CD4-positive, alpha-beta memory T cell (primary cell): ENCODE measurements at regions of chr13 and their contacts with region 1.

Region 1: DNA sequence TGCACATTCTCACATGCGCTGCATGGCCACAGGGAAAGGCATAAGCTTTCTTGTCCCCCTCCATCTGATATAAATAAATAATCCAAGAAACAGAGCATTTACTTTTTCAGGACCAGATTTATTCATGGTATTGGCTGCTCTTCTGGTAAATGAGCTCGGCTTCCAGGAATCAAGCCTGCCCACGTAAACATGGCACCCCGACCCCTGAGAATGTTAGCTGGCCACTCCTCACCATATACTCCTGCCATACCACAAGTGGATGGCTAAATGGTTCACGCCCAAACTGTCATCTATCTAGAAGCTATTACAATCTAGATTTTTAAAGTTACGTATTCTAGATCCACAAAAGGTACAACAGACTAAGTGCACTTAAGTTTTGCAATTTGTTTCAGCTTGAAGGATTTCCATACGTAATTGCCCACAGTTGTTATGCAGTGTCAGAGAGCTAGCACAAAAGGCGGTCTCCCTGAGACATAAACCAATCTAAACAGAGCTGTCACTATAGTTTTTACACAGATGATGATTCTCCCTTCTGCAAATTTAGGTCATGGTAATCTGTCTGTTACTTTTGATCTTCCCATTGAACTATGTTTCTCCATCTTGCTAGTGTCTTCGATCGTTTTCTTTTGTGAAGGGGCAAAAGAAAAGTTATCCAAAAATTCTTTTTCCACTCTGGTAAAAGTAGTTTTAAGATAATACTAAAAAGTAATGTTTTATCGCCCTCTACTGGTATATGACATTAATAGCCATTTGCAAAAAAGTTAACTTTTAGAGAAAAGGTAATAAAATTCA is 16.2 kb upstream of the FOXO1 start:
- DNase-seq: peak in 4 of 5 donors; percentile 44 to 58 (median 52)
- H3K4me3 ChIP-seq: no peak overlapping the region
- H3K4me3 Mint-ChIP-seq: peak overlapping the region in 1 of 8 donors; percentile 46
- H3K27ac ChIP-seq: no peak overlapping the region
- H3K27ac Mint-ChIP-seq: peak overlapping the region in 1 of 7 donors; percentile 48
- H3K4me1 ChIP-seq: peaks cover 4% of the 10 kb centered on the region
- H3K4me1 Mint-ChIP-seq: peaks cover 5 to 8% (median 6%) of the 10 kb centered on the region in 4 donors
- H3K27me3 ChIP-seq: no peaks in the 10 kb centered on the region
- H3K27me3 Mint-ChIP-seq: no peaks in the 10 kb centered on the region

Region 2: DNA sequence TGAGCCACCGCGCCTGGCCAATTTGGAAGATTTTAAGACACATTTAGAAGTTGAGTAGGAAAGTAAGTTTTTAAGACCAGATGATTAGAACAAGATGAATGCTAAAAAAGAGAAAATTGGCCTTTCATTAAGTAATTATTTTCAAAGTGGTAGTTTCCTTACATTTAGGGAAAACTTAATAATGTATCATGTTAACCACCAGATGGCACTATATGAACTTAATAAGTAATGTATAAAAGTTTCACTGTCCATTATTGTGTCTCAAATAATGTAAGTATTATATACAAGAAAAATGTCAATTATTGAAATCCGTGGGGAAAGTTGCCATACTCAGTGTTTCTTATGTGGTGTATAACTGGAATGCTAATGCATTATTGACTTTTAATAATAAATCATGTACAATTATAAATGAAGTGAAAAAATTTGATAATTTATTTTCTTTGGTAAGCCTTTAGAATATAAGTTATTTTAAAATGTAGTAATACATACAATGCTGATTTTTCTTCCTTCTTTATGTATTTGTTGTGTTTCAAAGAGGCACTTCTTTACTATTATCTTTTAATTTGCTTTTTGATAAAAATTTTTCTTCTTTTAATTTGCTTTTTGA is 998.0 kb before region 1 on chr13:
- CTCF ChIA-PET with region 1: interaction called, 70 read pairs
- POLR2A ChIA-PET with region 1: no interaction called
- intact Hi-C with region 1: loop called (anchors 1 kb)
- DNase-seq: peak in 4 of 5 donors; percentile 26 to 41 (median 29)
- H3K4me3 ChIP-seq: no peak overlapping the region
- H3K4me3 Mint-ChIP-seq: no peak overlapping the region
- H3K27ac ChIP-seq: no peak overlapping the region
- H3K27ac Mint-ChIP-seq: no peak overlapping the region
- H3K4me1 ChIP-seq: no peaks in the 10 kb centered on the region
- H3K4me1 Mint-ChIP-seq: peaks cover 0 to 16% (median 6%) of the 10 kb centered on the region in 4 donors
- H3K27me3 ChIP-seq: no peaks in the 10 kb centered on the region
- H3K27me3 Mint-ChIP-seq: no peaks in the 10 kb centered on the region

Region 3: DNA sequence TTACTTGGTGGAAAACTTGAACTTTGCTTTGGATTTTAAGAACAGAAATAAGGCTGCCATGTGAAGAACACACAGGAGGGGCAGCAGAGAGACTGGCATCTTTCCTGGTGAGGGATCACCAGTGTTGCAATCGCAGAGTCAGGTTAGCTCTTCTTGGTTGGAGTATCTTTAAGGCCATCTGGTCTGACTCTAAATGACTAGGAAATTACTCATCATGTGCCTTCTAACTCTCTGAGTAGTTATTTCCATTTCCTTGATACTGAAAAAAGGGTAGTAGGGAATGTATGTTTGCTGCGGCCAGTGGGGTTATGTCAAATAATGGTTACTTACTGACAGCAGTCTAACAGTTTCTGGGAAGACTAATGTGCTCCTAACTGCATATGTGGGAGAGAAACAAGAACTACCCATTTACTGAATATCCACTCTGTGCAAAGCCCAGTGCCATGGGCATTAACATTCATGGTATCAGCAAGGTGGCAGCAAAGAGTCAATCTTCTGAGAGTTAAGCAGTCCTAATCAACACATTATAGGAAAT is 905.1 kb before region 1 on chr13:
- CTCF ChIA-PET with region 1: interaction called, 62 read pairs
- POLR2A ChIA-PET with region 1: no interaction called
- intact Hi-C with region 1: loop called (anchors 1 kb)
- DNase-seq: peak; percentile 28 to 51 (median 37)
- H3K4me3 ChIP-seq: no peak overlapping the region
- H3K4me3 Mint-ChIP-seq: no peak overlapping the region
- H3K27ac ChIP-seq: no peak overlapping the region
- H3K27ac Mint-ChIP-seq: peak overlapping the region in 5 of 7 donors; percentile 22 to 78 (median 62)
- H3K4me1 ChIP-seq: peaks cover 29% of the 10 kb centered on the region
- H3K4me1 Mint-ChIP-seq: peaks cover 25 to 33% (median 29%) of the 10 kb centered on the region in 4 donors
- H3K27me3 ChIP-seq: no peaks in the 10 kb centered on the region
- H3K27me3 Mint-ChIP-seq: no peaks in the 10 kb centered on the region

Region 4: GRCh38 chr13:39783050-39783449 is 899.6 kb before region 1 on chr13:
- CTCF ChIA-PET with region 1: interaction called, 62 read pairs
- POLR2A ChIA-PET with region 1: no interaction called
- intact Hi-C with region 1: loop called (anchors 1 kb)
- DNase-seq: no peak
- H3K4me3 ChIP-seq: no peak overlapping the region
- H3K4me3 Mint-ChIP-seq: no peak overlapping the region
- H3K27ac ChIP-seq: no peak overlapping the region
- H3K27ac Mint-ChIP-seq: no peak overlapping the region
- H3K4me1 ChIP-seq: peaks cover 21% of the 10 kb centered on the region
- H3K4me1 Mint-ChIP-seq: peaks cover 15 to 20% (median 19%) of the 10 kb centered on the region in 4 donors
- H3K27me3 ChIP-seq: no peaks in the 10 kb centered on the region
- H3K27me3 Mint-ChIP-seq: peaks cover 0 to 2% of the 10 kb centered on the region in 2 donors

Region 5: GRCh38 chr13:39942552-39943273 is 739.9 kb before region 1 on chr13:
- CTCF ChIA-PET with region 1: interaction called, 124 read pairs
- POLR2A ChIA-PET with region 1: no interaction called
- intact Hi-C with region 1: loop called (anchors 1 kb)
- DNase-seq: peak; percentile 55 to 67 (median 63)
- H3K4me3 ChIP-seq: no peak overlapping the region
- H3K4me3 Mint-ChIP-seq: peak overlapping the region in 1 of 8 donors; percentile 20
- H3K27ac ChIP-seq: no peak overlapping the region
- H3K27ac Mint-ChIP-seq: peak overlapping the region in 1 of 7 donors; percentile 43
- H3K4me1 ChIP-seq: no peaks in the 10 kb centered on the region
- H3K4me1 Mint-ChIP-seq: peaks cover 3 to 13% (median 6%) of the 10 kb centered on the region in 4 donors
- H3K27me3 ChIP-seq: no peaks in the 10 kb centered on the region
- H3K27me3 Mint-ChIP-seq: peaks cover 0 to 1% of the 10 kb centered on the region in 2 donors

Region 6: GRCh38 chr13:40671956-40672764 is 10.5 kb before region 1 on chr13:
- CTCF ChIA-PET with region 1: interaction called, 24 read pairs
- POLR2A ChIA-PET with region 1: interaction called, 3 read pairs
- intact Hi-C with region 1: no loop called
- DNase-seq: no peak
- H3K4me3 ChIP-seq: no peak overlapping the region
- H3K4me3 Mint-ChIP-seq: no peak overlapping the region
- H3K27ac ChIP-seq: no peak overlapping the region
- H3K27ac Mint-ChIP-seq: no peak overlapping the region
- H3K4me1 ChIP-seq: peaks cover 21% of the 10 kb centered on the region
- H3K4me1 Mint-ChIP-seq: peaks cover 12 to 31% (median 22%) of the 10 kb centered on the region in 4 donors
- H3K27me3 ChIP-seq: no peaks in the 10 kb centered on the region
- H3K27me3 Mint-ChIP-seq: no peaks in the 10 kb centered on the region

Region 7: DNA sequence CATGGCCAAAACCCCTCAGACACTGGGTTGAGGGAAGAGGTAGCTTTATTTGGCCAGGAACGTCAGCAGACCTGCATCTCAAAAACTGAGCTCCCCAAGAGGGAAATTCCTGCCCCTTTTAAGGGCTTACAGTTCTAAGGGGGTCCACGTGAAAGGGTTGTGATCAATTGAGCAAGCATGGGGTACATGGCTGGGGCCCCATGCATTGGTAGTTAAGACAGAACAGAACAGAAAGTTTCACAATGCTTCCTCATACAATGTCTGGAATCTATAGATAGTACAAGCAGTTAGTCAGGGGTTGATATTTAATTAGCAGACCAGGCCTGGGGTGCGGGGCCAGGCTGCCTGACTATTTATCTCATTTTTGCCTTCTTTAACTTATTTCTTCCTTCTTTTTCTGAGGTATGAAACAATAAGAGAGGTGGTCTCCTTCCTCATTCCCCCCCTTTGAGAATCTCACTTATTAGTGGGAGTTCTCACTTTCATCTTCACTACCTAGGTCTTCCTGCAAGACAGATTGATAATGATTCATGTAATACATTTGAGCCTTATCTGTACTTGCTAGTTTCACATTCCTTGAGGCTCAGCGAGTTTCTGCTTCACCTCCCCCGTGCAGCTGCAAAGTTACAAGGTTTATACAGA is 191.6 kb after region 1 on chr13:
- CTCF ChIA-PET with region 1: no interaction called
- POLR2A ChIA-PET with region 1: no interaction called
- intact Hi-C with region 1: no loop called
- DNase-seq: peak in 1 of 5 donors; percentile 6
- H3K4me3 ChIP-seq: no peak overlapping the region
- H3K4me3 Mint-ChIP-seq: no peak overlapping the region
- H3K27ac ChIP-seq: no peak overlapping the region
- H3K27ac Mint-ChIP-seq: no peak overlapping the region
- H3K4me1 ChIP-seq: no peaks in the 10 kb centered on the region
- H3K4me1 Mint-ChIP-seq: peaks cover 0 to 1% (median 0%) of the 10 kb centered on the region in 4 donors
- H3K27me3 ChIP-seq: no peaks in the 10 kb centered on the region
- H3K27me3 Mint-ChIP-seq: no peaks in the 10 kb centered on the region